ENCODE measurements at regions of chr9 and their contacts with region 1.

Region 1: DNA sequence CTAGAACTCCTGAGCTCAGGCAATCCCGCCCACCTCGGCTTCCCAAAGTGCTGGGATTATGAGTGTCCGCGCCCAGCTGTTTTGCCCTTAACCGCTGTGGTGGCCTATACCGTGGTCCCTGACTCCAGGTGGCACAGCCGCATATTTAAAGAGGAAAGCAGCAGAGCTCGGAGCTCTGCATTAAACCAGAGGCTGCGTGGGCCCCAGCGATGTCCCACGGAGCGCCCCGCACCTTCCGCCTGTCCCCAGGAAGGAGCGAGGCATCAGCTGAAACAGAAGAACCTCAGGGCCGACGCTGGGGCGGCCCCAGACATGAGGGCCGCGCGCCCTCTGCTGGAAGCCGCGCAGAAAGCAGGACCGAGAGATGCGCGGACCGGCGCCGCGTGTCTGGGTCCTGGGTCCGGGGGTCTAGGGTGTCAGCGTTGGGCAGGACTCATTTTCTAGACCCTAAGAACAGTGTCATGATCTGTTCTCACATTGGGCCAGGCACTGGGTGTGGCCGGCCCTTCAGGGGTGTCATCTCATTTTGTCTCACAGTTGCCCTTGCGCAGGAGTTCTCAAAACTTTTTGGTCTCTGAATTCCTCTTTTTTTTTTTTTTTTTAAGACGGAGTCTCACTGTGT is 37.7 kb downstream of the LAMC3 start:
- DNase-seq: peak; percentile 69
- H3K4me3 Mint-ChIP-seq: no peak overlapping the region
- H3K27ac Mint-ChIP-seq: no peak overlapping the region
- H3K4me1 Mint-ChIP-seq: no peaks in the 10 kb centered on the region
- H3K27me3 Mint-ChIP-seq: no peaks in the 10 kb centered on the region
- CTCF ChIP-seq: peak; percentile 86

Region 2: DNA sequence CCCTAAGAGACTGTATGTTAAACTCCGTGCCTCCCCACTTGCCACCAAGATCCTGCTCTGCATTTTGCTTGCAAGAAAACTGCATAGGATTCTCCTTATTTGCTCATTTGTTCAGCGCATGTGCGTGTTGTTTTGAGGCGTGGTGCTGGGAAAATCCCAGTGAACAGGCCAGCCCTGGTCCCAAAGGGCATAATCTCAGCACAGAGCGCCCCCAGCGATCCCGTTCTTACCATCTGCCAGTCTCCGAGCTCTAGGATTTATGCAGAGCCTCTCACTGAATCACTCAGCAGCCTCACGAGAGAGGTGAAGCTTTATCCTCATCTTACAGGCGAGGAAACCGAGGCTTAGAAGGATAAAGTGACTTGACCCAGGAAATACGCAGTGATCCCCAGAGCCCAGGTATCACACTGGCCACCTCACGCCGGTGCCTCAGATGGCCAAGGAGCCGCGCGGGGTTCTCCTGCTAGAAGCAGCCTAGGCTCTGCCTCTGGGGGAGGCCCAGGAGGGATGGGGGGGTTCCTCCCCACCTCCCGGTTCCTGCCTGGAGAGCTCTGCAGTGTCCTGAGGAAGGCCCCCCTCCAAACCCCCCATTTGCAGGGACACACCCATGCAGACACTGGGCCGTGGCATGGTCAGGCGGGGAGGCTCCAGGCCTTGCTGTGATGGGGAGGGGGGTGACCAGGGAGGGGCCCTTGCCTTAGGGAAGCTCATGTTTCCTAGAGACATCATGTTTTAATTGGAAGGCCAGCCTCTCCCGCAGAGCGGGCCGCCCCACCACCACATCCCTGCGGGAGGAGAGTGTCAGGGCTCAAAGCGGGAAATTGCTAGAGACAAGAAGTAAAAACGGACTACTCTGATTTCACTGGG is 1369.5 kb before region 1 on chr9:
- CTCF ChIA-PET with region 1: no interaction called
- POLR2A ChIA-PET with region 1: no interaction called
- intact Hi-C with region 1: no loop called
- DNase-seq: no peak
- H3K4me3 Mint-ChIP-seq: no peak overlapping the region
- H3K27ac Mint-ChIP-seq: no peak overlapping the region
- H3K4me1 Mint-ChIP-seq: no peaks in the 10 kb centered on the region
- H3K27me3 Mint-ChIP-seq: peaks cover 56% of the 10 kb centered on the region
- CTCF ChIP-seq: no peak

Region 3: DNA sequence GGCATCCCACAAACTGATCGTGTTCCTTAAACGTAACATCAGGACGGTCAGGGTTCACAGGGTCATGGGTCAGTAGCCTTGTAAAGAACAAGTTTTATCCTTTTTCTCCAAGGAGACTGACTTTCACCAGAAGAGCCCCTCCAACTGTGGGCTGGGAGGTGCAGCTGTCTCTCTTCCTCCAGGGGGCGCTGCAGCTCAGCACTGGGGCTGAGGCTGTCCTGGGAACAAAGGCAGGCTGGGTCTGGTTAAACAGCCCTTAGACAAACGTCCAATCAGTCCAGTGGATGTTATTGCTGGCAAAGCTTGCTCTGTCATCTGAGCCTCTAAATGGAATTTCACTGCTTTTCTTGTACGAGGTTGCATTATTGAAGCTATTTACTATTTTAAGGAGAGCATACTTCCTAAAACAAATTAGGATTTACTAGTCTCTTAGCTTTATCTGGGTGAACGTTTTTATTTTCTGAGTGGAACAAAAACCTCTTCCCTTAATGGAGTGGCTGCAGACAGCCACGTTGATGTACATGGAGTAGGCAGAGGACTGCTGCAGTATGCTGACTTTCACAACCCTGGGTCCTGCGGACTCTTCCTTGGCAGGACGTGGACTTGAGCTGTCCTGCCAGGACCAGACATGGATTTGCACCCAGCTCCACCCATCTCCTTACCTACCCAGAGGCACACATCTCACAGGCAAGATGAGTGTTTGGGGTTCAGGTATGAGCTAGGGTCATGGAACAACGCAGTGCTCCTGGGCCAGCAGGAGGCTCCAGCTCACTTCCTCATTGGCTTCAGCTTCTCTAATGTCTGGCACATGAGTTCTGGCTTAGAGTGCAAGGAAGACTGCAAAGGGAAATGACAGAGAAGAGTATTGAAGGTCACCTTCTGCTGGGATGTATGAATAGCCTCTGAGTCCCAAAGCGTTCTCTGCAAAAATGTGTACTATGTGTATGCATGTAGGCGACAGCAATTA is 345.4 kb before region 1 on chr9:
- CTCF ChIA-PET with region 1: interaction called, 18 read pairs
- POLR2A ChIA-PET with region 1: no interaction called
- intact Hi-C with region 1: loop called (anchors 10 kb)
- DNase-seq: peak; percentile 76
- H3K4me3 Mint-ChIP-seq: no peak overlapping the region
- H3K27ac Mint-ChIP-seq: no peak overlapping the region
- H3K4me1 Mint-ChIP-seq: peaks cover 19% of the 10 kb centered on the region
- H3K27me3 Mint-ChIP-seq: no peaks in the 10 kb centered on the region
- CTCF ChIP-seq: peak; percentile 79

Region 4: DNA sequence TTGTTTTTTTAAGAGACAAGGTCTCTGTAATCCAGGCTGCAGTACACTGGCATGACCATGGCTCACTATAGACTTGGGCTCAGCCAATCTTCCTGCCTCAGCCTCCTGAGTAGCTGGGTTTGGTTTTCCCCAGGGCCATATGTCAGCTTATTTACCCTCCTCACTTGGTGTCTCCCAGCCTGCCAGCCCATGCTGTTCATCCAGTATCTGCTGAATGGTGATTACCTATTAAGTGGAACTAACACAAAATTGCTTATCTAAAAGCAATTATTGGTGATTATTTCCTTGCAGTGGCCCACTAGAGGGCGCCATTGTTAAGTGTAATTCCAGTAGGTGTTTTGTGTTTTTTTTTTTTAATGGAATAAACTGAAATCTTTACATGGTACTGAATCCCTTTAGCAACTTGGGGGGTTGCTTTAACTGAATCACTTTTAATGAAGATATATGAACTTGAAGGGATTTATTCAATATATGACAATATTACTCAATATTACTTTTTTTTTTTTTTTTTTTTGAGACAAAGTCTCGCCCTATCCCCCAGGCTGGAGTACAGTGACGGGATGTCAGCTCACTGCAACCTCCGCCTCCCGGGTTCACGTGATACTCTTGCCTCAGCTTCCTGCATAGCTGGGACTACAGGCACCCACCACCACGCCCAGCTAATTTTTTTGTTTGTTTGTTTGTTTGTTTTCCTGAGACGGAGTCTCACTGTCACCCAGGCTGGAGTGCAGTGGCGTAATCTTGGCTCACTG is 339.3 kb before region 1 on chr9:
- CTCF ChIA-PET with region 1: interaction called, 18 read pairs
- POLR2A ChIA-PET with region 1: no interaction called
- intact Hi-C with region 1: loop called (anchors 10 kb)
- DNase-seq: peak; percentile 80
- H3K4me3 Mint-ChIP-seq: no peak overlapping the region
- H3K27ac Mint-ChIP-seq: no peak overlapping the region
- H3K4me1 Mint-ChIP-seq: no peaks in the 10 kb centered on the region
- H3K27me3 Mint-ChIP-seq: no peaks in the 10 kb centered on the region
- CTCF ChIP-seq: peak; percentile 79

Region 5: GRCh38 chr9:130857864-130858738 is 188.6 kb before region 1 on chr9:
- CTCF ChIA-PET with region 1: no interaction called
- POLR2A ChIA-PET with region 1: no interaction called
- intact Hi-C with region 1: no loop called
- DNase-seq: peak; percentile 37
- H3K4me3 Mint-ChIP-seq: no peak overlapping the region
- H3K27ac Mint-ChIP-seq: no peak overlapping the region
- H3K4me1 Mint-ChIP-seq: no peaks in the 10 kb centered on the region
- H3K27me3 Mint-ChIP-seq: no peaks in the 10 kb centered on the region
- CTCF ChIP-seq: no peak

Region 6: GRCh38 chr9:130940693-130941576 is 105.8 kb before region 1 on chr9:
- CTCF ChIA-PET with region 1: interaction called, 13 read pairs
- POLR2A ChIA-PET with region 1: no interaction called
- intact Hi-C with region 1: loop called (anchors 5 kb)
- DNase-seq: peak; percentile 87
- H3K4me3 Mint-ChIP-seq: no peak overlapping the region
- H3K27ac Mint-ChIP-seq: no peak overlapping the region
- H3K4me1 Mint-ChIP-seq: peaks cover 24% of the 10 kb centered on the region
- H3K27me3 Mint-ChIP-seq: peaks cover 11% of the 10 kb centered on the region
- CTCF ChIP-seq: peak; percentile 81

Region 7: GRCh38 chr9:131031005-131031641 is 15.6 kb before region 1 on chr9:
- CTCF ChIA-PET with region 1: interaction called, 11 read pairs
- POLR2A ChIA-PET with region 1: no interaction called
- intact Hi-C with region 1: no loop called
- DNase-seq: no peak
- H3K4me3 Mint-ChIP-seq: no peak overlapping the region
- H3K27ac Mint-ChIP-seq: no peak overlapping the region
- H3K4me1 Mint-ChIP-seq: no peaks in the 10 kb centered on the region
- H3K27me3 Mint-ChIP-seq: peaks cover 23% of the 10 kb centered on the region
- CTCF ChIP-seq: no peak

Region 8: DNA sequence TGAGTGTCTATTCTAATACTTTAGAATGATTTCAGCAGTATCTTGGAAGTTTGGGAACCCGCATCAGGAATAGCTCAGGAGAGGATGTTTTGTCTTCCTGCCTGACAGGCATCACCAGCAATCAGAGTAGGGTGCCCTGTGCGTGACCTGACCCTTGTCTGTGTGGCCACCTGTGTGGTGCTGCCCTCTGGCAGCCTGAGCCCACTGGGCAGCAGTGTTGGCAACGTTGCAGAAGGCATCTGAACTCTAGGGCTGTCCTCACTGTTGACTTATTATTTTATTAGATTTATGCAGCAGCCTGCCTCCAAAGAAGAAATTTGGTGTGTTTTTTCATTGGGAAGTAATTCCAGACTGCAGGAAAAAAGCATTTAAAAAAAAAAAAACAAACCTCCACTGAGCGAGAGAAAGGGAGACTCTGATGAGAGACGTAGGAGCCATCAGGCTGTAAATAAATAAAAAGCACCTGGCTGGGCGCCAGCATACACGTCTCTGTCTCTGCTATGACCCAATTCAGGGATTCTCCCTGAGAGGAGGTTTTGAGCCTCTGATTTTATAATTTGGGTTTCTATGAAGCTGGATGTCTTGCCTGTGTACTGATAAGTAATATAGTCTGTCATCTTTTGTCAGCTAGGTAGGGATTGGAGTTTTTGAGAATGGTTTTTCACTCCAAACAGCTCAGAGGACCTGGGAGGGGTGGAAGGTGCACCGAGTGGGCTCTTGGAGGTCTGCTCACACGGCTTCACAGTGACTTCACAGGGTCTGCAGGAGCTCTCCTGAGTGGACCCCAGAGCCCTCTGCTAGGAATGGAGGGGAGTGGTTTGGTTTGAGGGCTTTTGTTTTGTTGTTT is 180.6 kb after region 1 on chr9:
- CTCF ChIA-PET with region 1: no interaction called
- POLR2A ChIA-PET with region 1: no interaction called
- intact Hi-C with region 1: no loop called
- DNase-seq: no peak
- H3K4me3 Mint-ChIP-seq: no peak overlapping the region
- H3K27ac Mint-ChIP-seq: no peak overlapping the region
- H3K4me1 Mint-ChIP-seq: no peaks in the 10 kb centered on the region
- H3K27me3 Mint-ChIP-seq: no peaks in the 10 kb centered on the region
- CTCF ChIP-seq: no peak